CD4-positive, alpha-beta T cell (primary cell): ENCODE measurements at regions of chr10 and their contacts with region 1.

Region 1: DNA sequence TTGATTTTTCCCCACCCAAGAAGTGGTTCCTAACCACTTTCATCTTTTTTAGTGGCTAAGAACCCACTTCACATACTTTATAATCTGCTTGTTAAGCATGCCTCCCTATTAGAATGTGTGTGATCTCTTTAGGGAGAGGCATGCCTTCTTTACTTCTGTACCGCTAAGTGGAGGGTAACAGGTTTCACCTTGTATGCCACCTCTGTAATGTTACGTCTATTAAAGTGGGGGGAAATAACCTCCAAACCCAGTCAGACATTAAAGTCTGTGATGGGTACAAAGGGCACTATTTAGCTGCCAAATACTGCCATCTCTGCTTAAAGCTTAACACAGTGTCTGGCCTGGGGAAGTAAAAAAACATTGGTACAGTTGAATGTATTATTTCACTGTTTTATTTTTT is 51.9 kb downstream of the EPC1 start:
- DNase-seq: peak in 2 of 14 experiments; percentile 32 to 51
- ATAC-seq: peak; percentile 81
- H3K4me3 ChIP-seq: no peak overlapping the region
- H3K4me3 Mint-ChIP-seq: no peak overlapping the region
- H3K27ac ChIP-seq: peak overlapping the region in 1 of 2 donors; percentile 14
- H3K27ac Mint-ChIP-seq: peak overlapping the region; percentile 74
- H3K4me1 ChIP-seq: peaks cover 28% of the 10 kb centered on the region
- H3K4me1 Mint-ChIP-seq: peaks cover 62% of the 10 kb centered on the region
- H3K27me3 ChIP-seq: no peaks in the 10 kb centered on the region
- H3K27me3 Mint-ChIP-seq: no peaks in the 10 kb centered on the region
- CTCF ChIP-seq: no peak

Region 2: DNA sequence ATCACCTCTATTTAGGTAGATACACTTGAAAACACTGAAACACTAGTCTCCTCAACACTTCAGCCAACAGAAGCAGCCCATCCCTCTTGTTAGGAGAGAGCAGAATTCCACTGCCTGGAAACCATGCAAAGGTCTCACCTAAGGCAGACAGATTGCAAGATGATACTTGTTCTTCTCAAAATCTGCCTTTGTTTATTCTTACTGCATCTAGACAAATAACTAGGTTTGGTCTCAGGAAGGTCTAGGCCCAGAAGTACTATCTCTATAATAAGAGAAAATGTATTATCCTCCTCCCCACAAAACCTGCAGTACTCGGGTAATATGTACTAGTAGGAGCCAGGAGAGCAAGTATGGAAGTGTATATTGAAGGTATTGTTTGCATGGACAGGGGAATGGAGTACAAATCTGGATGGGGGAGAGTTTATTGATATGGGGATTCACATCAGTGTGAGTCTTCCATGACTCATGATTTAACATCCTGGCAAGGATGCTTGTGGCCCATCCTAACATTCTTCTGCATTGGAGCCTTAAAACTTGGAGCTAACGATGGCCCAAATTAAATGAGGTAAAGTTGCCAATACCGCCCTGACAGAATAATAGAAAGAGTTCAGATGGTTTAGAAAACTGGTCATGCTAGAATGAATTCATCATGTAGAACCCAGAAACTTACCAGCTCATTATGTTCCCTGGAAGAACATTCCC is 57.2 kb before region 1 on chr10:
- CTCF ChIA-PET with region 1: no interaction called
- POLR2A ChIA-PET with region 1: no interaction called
- intact Hi-C with region 1: no loop called
- DNase-seq: no peak
- ATAC-seq: no peak
- H3K4me3 ChIP-seq: no peak overlapping the region
- H3K4me3 Mint-ChIP-seq: no peak overlapping the region
- H3K27ac ChIP-seq: no peak overlapping the region
- H3K27ac Mint-ChIP-seq: no peak overlapping the region
- H3K4me1 ChIP-seq: no peaks in the 10 kb centered on the region
- H3K4me1 Mint-ChIP-seq: no peaks in the 10 kb centered on the region
- H3K27me3 ChIP-seq: no peaks in the 10 kb centered on the region
- H3K27me3 Mint-ChIP-seq: no peaks in the 10 kb centered on the region
- CTCF ChIP-seq: no peak

Region 3: GRCh38 chr10:32271617-32272016 is 23.4 kb before region 1 on chr10:
- CTCF ChIA-PET with region 1: no interaction called
- POLR2A ChIA-PET with region 1: interaction called, 3 read pairs
- intact Hi-C with region 1: loop called in 1 of 2 experiments (anchors 2 kb)
- DNase-seq: no peak
- ATAC-seq: no peak
- H3K4me3 ChIP-seq: no peak overlapping the region
- H3K4me3 Mint-ChIP-seq: no peak overlapping the region
- H3K27ac ChIP-seq: no peak overlapping the region
- H3K27ac Mint-ChIP-seq: no peak overlapping the region
- H3K4me1 ChIP-seq: no peaks in the 10 kb centered on the region
- H3K4me1 Mint-ChIP-seq: peaks cover 12% of the 10 kb centered on the region
- H3K27me3 ChIP-seq: no peaks in the 10 kb centered on the region
- H3K27me3 Mint-ChIP-seq: no peaks in the 10 kb centered on the region
- CTCF ChIP-seq: no peak

Region 4: GRCh38 chr10:32326119-32326518 is 31.1 kb after region 1 on chr10:
- CTCF ChIA-PET with region 1: no interaction called
- POLR2A ChIA-PET with region 1: no interaction called
- intact Hi-C with region 1: loop called in 1 of 2 experiments (anchors 5 kb)
- DNase-seq: no peak
- ATAC-seq: no peak
- H3K4me3 ChIP-seq: no peak overlapping the region
- H3K4me3 Mint-ChIP-seq: peak overlapping the region; percentile 38
- H3K27ac ChIP-seq: peak overlapping the region in 1 of 2 donors; percentile 30
- H3K27ac Mint-ChIP-seq: peak overlapping the region; percentile 16
- H3K4me1 ChIP-seq: peaks cover 44% of the 10 kb centered on the region
- H3K4me1 Mint-ChIP-seq: peaks cover 85% of the 10 kb centered on the region
- H3K27me3 ChIP-seq: no peaks in the 10 kb centered on the region
- H3K27me3 Mint-ChIP-seq: no peaks in the 10 kb centered on the region
- CTCF ChIP-seq: no peak

Region 5: DNA sequence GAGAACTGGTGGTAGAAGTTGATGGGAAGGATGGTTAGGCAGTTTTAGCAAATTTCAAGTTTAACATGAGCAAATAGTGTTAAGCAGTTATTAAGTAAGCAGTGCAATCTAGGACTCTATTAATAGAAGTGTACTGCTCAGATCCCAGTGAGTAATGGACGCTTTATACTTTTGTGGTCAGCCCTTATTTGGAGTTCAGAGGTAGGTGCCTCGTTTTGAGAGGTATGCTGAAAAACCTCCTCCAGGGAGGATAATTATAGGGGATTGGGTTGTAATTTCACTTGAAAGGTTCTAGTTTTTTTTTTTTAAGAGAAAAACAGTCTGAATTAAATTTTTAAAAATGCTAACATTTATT is 117.4 kb after region 1 on chr10:
- CTCF ChIA-PET with region 1: no interaction called
- POLR2A ChIA-PET with region 1: no interaction called
- intact Hi-C with region 1: no loop called
- DNase-seq: no peak
- ATAC-seq: no peak
- H3K4me3 ChIP-seq: no peak overlapping the region
- H3K4me3 Mint-ChIP-seq: no peak overlapping the region
- H3K27ac ChIP-seq: no peak overlapping the region
- H3K27ac Mint-ChIP-seq: no peak overlapping the region
- H3K4me1 ChIP-seq: no peaks in the 10 kb centered on the region
- H3K4me1 Mint-ChIP-seq: peaks cover 5% of the 10 kb centered on the region
- H3K27me3 ChIP-seq: no peaks in the 10 kb centered on the region
- H3K27me3 Mint-ChIP-seq: no peaks in the 10 kb centered on the region
- CTCF ChIP-seq: no peak